Sigmoid colon (tissue), 7 donors: ENCODE measurements at regions of chr5 and their contacts with region 1.

Region 1: DNA sequence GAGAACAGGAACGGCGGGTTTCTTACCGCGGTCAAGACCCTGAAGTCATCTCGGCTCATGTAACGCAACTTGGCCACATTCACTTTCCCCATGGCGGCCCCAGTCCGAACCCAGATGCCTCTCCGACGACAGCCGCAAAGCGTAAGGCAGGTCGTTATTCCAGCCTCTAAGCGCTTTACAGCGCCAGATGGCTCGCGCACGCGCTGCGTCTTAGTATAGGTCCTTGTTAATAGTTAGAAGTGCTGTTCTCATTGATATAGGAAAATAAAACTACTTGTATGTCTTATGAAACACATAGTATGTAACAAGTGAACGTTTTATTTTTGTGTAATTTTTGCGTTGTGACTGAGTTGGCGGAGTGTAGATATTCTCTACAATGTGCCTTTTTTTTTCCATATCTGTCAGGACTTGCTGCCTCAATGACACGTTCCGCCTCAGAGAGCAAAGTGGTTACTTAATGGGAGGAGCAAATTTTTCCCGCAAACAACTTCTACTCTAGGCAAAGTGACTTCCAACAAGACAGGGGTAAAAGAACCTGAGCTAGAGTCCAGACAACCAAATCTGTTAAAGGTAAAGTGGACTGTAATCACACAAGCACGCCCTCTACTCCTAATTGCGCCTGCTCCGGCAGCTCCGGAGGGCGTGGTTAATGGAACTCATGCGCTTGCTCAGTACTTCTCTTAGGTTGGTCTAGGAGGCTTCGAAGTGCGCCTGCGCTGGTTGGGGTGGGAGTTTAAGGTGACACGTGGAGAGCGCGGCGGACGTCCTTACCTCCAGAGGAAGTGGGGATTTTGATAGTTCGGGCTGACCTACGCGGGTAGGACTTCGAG is at the start of gene RIOK2:
- DNase-seq: peak; percentile 95
- H3K4me3 ChIP-seq: peak within 1 kb of the TSS; percentile 64 to 86 (median 78)
- H3K27ac ChIP-seq: peak within 1 kb of the TSS; percentile 87 to 90 (median 89)
- H3K4me1 ChIP-seq: peaks cover 0 to 31% (median 18%) of the 10 kb centered on the region in 4 donors
- H3K27me3 ChIP-seq: no peaks in the 10 kb centered on the region
- CTCF ChIP-seq: no peak
- EP300 ChIP-seq: no peak
- POLR2A ChIP-seq: peak; percentile 47 to 54
- total RNA-seq, gene RIOK2: 16.1 to 28.0 (median 23.0) TPM

Region 2: GRCh38 chr5:95712347-95712958 is 1470.9 kb before region 1 on chr5:
- intact Hi-C with region 1: no loop called
- DNase-seq: no peak
- H3K4me3 ChIP-seq: no peak overlapping the region
- H3K27ac ChIP-seq: no peak overlapping the region
- H3K4me1 ChIP-seq: peaks cover 0 to 9% (median 4%) of the 10 kb centered on the region in 4 donors
- H3K27me3 ChIP-seq: no peaks in the 10 kb centered on the region
- CTCF ChIP-seq: no peak
- EP300 ChIP-seq: no peak
- POLR2A ChIP-seq: no peak

Region 3: DNA sequence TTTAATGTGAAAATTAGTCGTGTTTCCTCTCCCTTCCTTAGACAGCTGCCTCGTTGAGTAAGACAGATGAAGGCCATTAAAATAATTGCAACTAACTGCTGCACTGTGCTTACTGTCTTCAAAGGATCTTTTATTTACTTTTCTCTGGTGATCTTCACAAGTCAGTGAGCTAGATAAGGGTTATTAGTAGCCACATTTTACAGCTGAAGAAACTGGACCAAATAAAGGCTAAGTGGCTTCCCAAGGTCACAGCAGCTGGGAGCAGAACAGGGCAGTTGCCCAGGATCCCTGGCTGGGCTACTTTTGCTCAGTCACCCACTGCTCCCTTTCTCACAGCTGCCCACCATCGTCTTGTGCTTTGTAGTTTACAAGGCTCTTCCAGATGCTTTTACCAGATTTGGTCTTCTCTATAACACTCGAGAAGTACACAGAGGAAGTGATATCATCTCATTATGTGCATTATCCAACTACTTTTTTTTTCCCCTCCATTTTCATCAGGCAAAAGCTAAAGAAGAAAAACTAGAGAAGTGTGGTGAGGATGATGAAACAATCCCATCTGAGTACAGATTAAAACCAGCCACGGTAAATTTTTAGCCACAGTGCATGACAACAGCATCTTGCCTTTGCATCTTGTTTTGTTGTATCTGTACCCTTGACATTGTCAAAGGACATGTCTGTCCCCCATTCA is 437.3 kb before region 1 on chr5:
- intact Hi-C with region 1: loop called (anchors 5 kb)
- DNase-seq: no peak
- H3K4me3 ChIP-seq: no peak overlapping the region
- H3K27ac ChIP-seq: peak overlapping the region in 3 of 4 donors; percentile 37 to 67 (median 66)
- H3K4me1 ChIP-seq: peaks cover 0 to 54% (median 34%) of the 10 kb centered on the region in 4 donors
- H3K27me3 ChIP-seq: no peaks in the 10 kb centered on the region
- CTCF ChIP-seq: no peak
- EP300 ChIP-seq: no peak
- POLR2A ChIP-seq: no peak

Region 4: DNA sequence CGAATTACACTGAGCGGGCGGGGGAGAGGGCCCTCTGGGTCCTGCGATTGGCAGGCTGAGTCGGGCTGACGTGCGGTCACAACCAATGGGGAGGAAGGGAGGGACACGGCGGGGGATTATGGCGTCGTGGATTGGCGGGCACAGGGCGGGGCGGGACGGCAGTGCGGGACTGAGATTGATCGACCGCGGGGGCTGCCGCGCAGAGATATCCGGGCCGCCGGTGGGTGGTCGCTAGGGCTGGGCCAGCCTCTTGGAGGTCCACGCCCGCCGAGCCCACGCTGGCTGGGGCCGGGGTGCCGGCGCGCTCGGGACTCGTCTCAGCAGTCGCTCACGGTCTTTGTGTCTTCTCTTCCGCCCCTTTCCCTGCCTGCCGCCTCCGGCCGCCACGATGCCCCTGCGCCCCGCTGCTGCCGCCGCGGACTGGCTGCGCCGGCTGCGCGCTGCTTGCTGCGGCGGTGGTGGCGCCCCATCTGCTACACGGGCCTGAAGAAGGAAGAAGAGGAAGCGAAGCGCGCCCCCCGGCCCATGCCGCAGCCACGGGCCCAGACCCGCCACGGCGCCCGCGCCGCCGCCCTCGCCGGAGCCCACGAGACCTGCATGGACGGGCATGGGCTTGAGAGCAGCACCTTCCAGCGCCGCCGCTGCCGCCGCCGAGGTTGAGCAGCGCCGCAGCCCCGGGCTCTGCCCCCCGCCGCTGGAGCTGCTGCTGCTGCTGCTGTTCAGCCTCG is 1590.3 kb after region 1 on chr5 and contains the start of gene RGMB:
- intact Hi-C with region 1: loop called (anchors 2 kb)
- DNase-seq: peak; percentile 99
- H3K4me3 ChIP-seq: peak within 1 kb of the TSS; percentile 64 to 93 (median 83)
- H3K27ac ChIP-seq: peak within 1 kb of the TSS; percentile 89 to 97 (median 96)
- H3K4me1 ChIP-seq: peaks cover 0 to 48% (median 32%) of the 10 kb centered on the region in 4 donors
- H3K27me3 ChIP-seq: no peaks in the 10 kb centered on the region
- CTCF ChIP-seq: no peak
- EP300 ChIP-seq: no peak
- POLR2A ChIP-seq: peak; percentile 66 to 73
- total RNA-seq, gene RGMB: 23.3 to 32.1 (median 25.0) TPM